ENCODE measurements at regions of chr7 and their contacts with region 1.

Region 1: DNA sequence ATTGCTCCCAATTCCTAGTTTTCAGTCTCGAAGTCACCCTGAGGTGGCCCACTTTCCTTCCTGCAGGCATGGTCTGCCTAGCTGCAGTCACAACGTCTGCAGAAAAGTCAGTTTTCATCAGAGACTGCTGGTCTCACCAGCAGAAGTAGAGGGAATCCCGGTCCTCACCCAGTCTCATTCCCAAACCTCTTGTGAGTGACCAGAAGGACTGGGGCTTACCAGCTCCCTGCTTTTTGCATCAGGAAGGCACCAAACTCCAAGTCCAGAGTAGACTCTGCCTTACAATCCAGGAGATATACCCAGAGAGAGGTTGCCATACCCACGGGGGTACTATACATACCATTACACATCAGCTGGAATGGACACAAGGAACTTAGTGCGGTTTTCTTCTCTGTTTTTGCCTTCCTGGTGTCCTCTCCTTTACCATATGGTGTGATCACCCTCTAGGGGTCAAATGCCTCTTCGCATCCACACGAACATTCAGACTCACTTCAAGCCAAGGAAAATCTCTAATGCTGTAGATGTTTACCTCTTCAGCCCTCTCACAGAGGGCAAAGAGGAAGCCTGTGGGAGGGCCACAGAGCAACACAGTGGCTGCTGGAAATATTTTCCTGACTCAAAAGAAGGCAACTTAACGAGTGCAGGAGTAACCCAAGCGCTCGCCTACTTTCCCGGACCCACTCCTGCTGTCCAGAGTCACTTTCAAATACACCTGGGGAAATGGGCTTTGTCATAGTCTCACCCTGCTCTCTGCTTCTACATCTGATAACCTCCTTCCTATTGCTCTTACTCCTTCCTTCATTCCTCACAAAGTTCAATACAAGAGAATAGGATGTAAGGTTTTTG is 220.9 kb downstream of the C7orf25 start:
- DNase-seq: no peak
- H3K4me3 ChIP-seq: no peak overlapping the region
- H3K27ac ChIP-seq: peak overlapping the region in 3 of 4 donors; percentile 57 to 67 (median 58)
- H3K4me1 ChIP-seq: peaks cover 0 to 64% (median 44%) of the 10 kb centered on the region in 4 donors
- H3K27me3 ChIP-seq: no peaks in the 10 kb centered on the region
- CTCF ChIP-seq: peak; percentile 56 to 73 (median 60)
- EP300 ChIP-seq: no peak
- POLR2A ChIP-seq: no peak

Region 2: DNA sequence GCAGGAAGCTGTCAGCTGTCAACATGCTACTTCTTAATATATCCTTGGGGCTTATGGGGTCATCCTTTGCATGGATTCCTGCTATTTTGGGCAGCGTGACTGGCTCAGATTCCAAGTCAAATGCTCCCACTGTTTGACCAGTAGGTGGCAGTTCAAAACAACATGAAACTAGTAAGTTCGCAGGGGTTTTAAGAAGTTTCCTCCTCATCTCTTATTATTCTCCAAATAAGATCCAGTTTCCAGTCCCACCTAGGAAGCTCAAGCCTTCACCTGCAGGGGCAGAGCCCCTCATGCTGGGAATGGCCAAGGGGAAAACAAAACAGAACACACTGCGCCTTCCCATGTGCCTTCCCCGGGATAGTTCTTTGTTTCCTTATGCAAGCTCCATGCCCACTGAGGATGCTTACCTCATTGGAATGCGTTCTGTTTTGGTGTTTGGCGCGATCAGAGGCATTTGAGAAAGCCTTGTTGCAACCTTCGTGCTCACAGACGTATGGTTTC is 713.8 kb before region 1 on chr7:
- intact Hi-C with region 1: loop called (anchors 2 kb)
- DNase-seq: no peak
- H3K4me3 ChIP-seq: no peak overlapping the region
- H3K27ac ChIP-seq: peak overlapping the region in 3 of 4 donors; percentile 58 to 70 (median 65)
- H3K4me1 ChIP-seq: peaks cover 0 to 56% (median 52%) of the 10 kb centered on the region in 4 donors
- H3K27me3 ChIP-seq: no peaks in the 10 kb centered on the region
- CTCF ChIP-seq: peak; percentile 55 to 79 (median 62)
- EP300 ChIP-seq: no peak
- POLR2A ChIP-seq: no peak

Region 3: GRCh38 chr7:42338231-42338915 is 352.6 kb before region 1 on chr7:
- intact Hi-C with region 1: loop called (anchors 5 kb)
- DNase-seq: no peak
- H3K4me3 ChIP-seq: no peak overlapping the region
- H3K27ac ChIP-seq: peak overlapping the region in 3 of 4 donors; percentile 34 to 51 (median 41)
- H3K4me1 ChIP-seq: peaks cover 0 to 48% (median 27%) of the 10 kb centered on the region in 4 donors
- H3K27me3 ChIP-seq: no peaks in the 10 kb centered on the region
- CTCF ChIP-seq: no peak
- EP300 ChIP-seq: no peak
- POLR2A ChIP-seq: no peak

Region 4: DNA sequence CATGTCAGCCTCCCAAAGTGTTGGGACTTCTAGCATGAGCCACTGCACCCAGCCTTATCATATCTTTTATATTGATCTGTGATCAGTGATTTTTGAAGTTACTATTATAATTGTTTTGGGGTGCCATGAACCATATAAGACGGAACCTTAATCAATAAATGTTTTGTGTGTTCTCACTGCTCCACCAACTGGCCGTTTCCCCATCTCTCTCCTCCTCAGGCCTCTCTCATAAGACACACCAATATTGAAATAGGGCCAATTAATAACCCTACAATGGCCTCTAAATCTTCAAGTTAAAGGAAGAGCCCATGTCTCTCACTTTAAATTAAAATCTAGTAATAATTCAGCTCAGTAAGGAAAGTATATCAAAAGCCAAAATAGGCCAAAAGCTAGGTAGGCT is 154.0 kb before region 1 on chr7:
- intact Hi-C with region 1: no loop called
- DNase-seq: no peak
- H3K4me3 ChIP-seq: no peak overlapping the region
- H3K27ac ChIP-seq: no peak overlapping the region
- H3K4me1 ChIP-seq: no peaks in the 10 kb centered on the region
- H3K27me3 ChIP-seq: no peaks in the 10 kb centered on the region
- CTCF ChIP-seq: no peak
- EP300 ChIP-seq: no peak
- POLR2A ChIP-seq: no peak

Region 5: DNA sequence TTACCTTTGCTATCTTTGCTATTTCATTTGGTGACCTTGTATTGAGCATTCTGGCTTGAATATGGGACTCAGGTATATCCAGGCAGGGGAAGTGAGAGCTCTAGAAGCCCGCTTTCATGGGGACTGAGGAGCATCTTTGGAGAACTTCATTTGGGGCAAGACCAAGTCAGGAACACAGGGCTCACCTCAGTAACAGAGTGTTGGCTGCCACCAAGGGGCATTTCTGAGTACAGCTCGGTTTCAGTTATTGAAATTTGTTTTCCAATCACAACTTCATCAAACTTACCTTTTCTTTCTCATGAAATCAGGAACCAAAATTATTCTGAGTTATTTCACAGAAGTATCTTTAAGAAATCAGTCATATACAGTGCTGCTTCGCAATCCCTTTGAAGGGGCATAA is 116.3 kb before region 1 on chr7:
- intact Hi-C with region 1: loop called (anchors 5 kb)
- DNase-seq: no peak
- H3K4me3 ChIP-seq: no peak overlapping the region
- H3K27ac ChIP-seq: peak overlapping the region in 3 of 4 donors; percentile 53 to 74 (median 68)
- H3K4me1 ChIP-seq: peaks cover 0 to 58% (median 45%) of the 10 kb centered on the region in 4 donors
- H3K27me3 ChIP-seq: no peaks in the 10 kb centered on the region
- CTCF ChIP-seq: peak in 3 of 4 experiments; percentile 13 to 30 (median 29)
- EP300 ChIP-seq: no peak
- POLR2A ChIP-seq: no peak

Region 6: GRCh38 chr7:42960762-42961161 is 269.7 kb after region 1 on chr7:
- intact Hi-C with region 1: no loop called
- DNase-seq: no peak
- H3K4me3 ChIP-seq: no peak overlapping the region
- H3K27ac ChIP-seq: no peak overlapping the region
- H3K4me1 ChIP-seq: peaks cover 0 to 21% (median 16%) of the 10 kb centered on the region in 4 donors
- H3K27me3 ChIP-seq: no peaks in the 10 kb centered on the region
- CTCF ChIP-seq: no peak
- EP300 ChIP-seq: no peak
- POLR2A ChIP-seq: no peak